ENCODE measurements at regions of chr2 and their contacts with region 1.

Region 1: GRCh38 chr2:190835303-190835930 is 45.2 kb upstream of the GLS start:
- DNase-seq: peak; percentile 59
- H3K4me3 ChIP-seq: no peak overlapping the region
- CTCF ChIP-seq: no peak

Region 2: DNA sequence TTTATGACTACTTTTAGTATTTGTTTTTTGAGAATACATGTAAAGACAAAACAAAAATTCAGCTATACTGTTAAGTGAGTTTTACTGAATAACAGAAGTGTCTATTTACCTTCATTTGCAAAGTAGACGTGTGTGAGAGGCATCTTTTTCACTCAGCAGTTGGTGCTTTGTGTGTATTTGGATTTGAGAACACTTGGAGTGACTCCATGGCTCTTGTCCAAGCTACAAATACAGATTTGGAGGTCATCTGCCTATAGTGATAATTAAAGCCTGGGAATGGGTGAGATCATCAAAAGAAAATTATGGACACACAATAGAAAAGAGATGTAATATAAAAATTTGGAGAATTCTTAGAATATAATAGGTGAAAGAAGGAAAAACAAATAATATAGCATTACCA is 180.3 kb before region 1 on chr2:
- CTCF ChIA-PET with region 1: no interaction called
- POLR2A ChIA-PET with region 1: no interaction called
- DNase-seq: no peak
- H3K4me3 ChIP-seq: no peak overlapping the region
- CTCF ChIP-seq: no peak

Region 3: GRCh38 chr2:190819840-190820301 is 15.5 kb before region 1 on chr2:
- CTCF ChIA-PET with region 1: interaction called, 7 read pairs
- POLR2A ChIA-PET with region 1: interaction called, 11 read pairs
- DNase-seq: peak; percentile 71
- H3K4me3 ChIP-seq: no peak overlapping the region
- CTCF ChIP-seq: no peak

Region 4: GRCh38 chr2:190858817-190859216 is 23.4 kb after region 1 on chr2:
- CTCF ChIA-PET with region 1: interaction called, 3 read pairs
- POLR2A ChIA-PET with region 1: interaction called, 11 read pairs
- DNase-seq: peak; percentile 66
- H3K4me3 ChIP-seq: no peak overlapping the region
- CTCF ChIP-seq: no peak